ENCODE measurements at regions of chr10 and their contacts with region 1.

Region 1: GRCh38 chr10:113219441-113219840 is 269.4 kb downstream of the TCF7L2 start:
- DNase-seq: no peak
- ATAC-seq: no peak

Region 2: DNA sequence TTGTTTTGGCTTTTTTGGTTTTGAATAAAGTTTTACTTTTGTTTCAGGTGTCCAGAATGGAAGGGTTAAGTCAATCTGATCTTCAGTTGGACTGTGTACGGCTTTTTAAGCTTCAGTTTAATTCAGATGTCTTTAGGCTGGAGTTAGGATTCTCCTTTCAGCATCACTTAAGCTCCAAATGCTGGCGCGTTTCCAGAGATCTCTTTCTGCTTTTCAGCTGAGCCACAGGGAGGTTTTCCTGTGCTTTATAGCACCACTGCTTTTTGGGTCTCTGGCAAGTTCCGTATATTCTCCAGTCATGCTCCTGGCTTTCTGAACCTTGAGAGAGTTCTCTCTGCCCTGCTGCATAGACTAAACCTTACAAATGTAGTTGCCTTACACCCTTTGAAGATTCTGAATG is 712.4 kb before region 1 on chr10:
- intact Hi-C with region 1: no loop called
- DNase-seq: no peak
- ATAC-seq: no peak

Region 3: DNA sequence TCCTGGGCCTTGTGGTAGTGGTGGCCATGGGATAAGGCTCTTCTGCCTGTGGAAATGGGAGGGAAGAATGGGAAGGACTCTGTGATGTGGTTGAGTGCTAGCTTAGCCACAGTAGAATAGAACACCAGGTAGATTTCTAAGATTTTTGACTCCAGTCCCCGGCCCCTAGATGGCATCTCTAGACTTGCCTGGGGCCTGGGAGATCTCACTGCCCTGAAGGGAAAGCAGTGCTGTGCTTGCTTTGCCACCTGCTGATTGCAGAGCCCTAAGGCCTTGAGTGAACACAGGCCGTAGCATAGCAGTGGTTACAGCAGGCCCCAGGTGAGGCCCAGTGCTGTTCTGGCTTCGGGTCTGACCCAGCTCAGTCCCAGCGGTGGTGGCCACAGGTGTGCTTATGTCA is 17.4 kb before region 1 on chr10:
- intact Hi-C with region 1: loop called (anchors 2 kb)
- DNase-seq: no peak
- ATAC-seq: no peak

Measured in sciatic nerve (tissue), 2 donors.